ENCODE measurements at regions of chr7 and their contacts with region 1.

Region 1: GRCh38 chr7:8236780-8237407 is 25.1 kb downstream of the ICA1 start:
- DNase-seq: no peak
- ATAC-seq: no peak
- H3K4me3 ChIP-seq: no peak overlapping the region
- H3K27ac ChIP-seq: no peak overlapping the region
- H3K4me1 ChIP-seq: peaks cover 13% of the 10 kb centered on the region; the same call in 1 of the 2 replicates
- H3K27me3 ChIP-seq: no peaks in the 10 kb centered on the region
- CTCF ChIP-seq: no peak
- EP300 ChIP-seq: no peak
- POLR2A ChIP-seq: no peak
- RAD21 ChIP-seq: no peak

Region 2: GRCh38 chr7:7090460-7090859 is 1146.4 kb before region 1 on chr7:
- CTCF ChIA-PET with region 1: no interaction called
- POLR2A ChIA-PET with region 1: no interaction called
- in situ Hi-C with region 1: no loop called
- intact Hi-C with region 1: loop called (anchors 5 kb)
- DNase-seq: no peak
- ATAC-seq: no peak
- H3K4me3 ChIP-seq: no peak overlapping the region
- H3K27ac ChIP-seq: no peak overlapping the region
- H3K4me1 ChIP-seq: no peaks in the 10 kb centered on the region
- H3K27me3 ChIP-seq: no peaks in the 10 kb centered on the region
- CTCF ChIP-seq: no peak
- EP300 ChIP-seq: no peak
- POLR2A ChIP-seq: no peak
- RAD21 ChIP-seq: no peak

Measured in HepG2 (cell line).